ENCODE measurements at regions of chr17 and their contacts with region 1.

Region 1: GRCh38 chr17:55770148-55770870 is 19.5 kb downstream of the PCTP start:
- DNase-seq: no peak
- H3K4me3 ChIP-seq: no peak overlapping the region
- H3K27ac ChIP-seq: no peak overlapping the region
- H3K4me1 ChIP-seq: no peaks in the 10 kb centered on the region
- H3K27me3 ChIP-seq: no peaks in the 10 kb centered on the region
- CTCF ChIP-seq: peak in 2 of 3 experiments; percentile 11 to 69; a peak in 2 of 4 replicates
- EP300 ChIP-seq: no peak
- POLR2A ChIP-seq: no peak
- RAD21 ChIP-seq: peak; percentile 78

Region 2: GRCh38 chr17:55527540-55528118 is 242.7 kb before region 1 on chr17:
- CTCF ChIA-PET with region 1: interaction called, 169 read pairs
- POLR2A ChIA-PET with region 1: no interaction called
- DNase-seq: peak in 1 of 2 experiments; percentile 50
- H3K4me3 ChIP-seq: no peak overlapping the region
- H3K27ac ChIP-seq: no peak overlapping the region
- H3K4me1 ChIP-seq: peaks cover 0 to 2% (median 0%) of the 10 kb centered on the region in 4 experiments; a peak in 1 of 7 replicates
- H3K27me3 ChIP-seq: no peaks in the 10 kb centered on the region
- CTCF ChIP-seq: peak in 2 of 3 experiments; percentile 67 to 68; a peak in 3 of 4 replicates
- EP300 ChIP-seq: no peak
- POLR2A ChIP-seq: no peak
- RAD21 ChIP-seq: peak; percentile 88 to 89

Region 3: DNA sequence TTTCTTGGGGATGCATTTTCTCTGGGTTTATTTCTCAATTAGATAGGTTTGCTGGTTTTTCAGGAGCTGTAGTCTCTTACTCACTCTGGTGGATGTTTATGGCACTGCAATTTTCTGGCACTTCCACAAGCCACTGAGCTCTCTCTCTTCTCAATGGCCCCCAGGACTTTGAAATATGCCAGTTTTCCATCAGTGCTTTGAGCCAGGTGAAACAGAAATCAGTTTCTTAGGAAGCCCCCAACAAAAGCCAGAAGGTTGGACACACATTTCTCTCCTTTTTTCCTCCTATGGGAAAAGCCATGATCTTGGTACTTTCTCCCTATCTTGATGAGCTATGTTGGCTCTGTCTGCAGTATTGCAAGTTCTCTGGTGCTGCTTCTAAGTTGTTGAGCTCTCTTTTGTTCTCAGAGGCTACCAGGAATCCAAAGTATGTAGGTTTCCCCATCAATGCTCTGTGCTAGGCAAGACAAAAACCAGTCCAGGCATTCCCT is 168.4 kb before region 1 on chr17:
- CTCF ChIA-PET with region 1: interaction called, 18 read pairs
- POLR2A ChIA-PET with region 1: no interaction called
- DNase-seq: peak; percentile 21 to 58
- H3K4me3 ChIP-seq: peak overlapping the region in 1 of 4 experiments; percentile 37; a peak in 1 of 8 replicates
- H3K27ac ChIP-seq: no peak overlapping the region
- H3K4me1 ChIP-seq: peaks cover 0 to 3% (median under 1%) of the 10 kb centered on the region in 4 experiments; a peak in 3 of 7 replicates
- H3K27me3 ChIP-seq: no peaks in the 10 kb centered on the region
- CTCF ChIP-seq: peak in 2 of 3 experiments; percentile 72 to 78; a peak in 3 of 4 replicates
- EP300 ChIP-seq: no peak
- POLR2A ChIP-seq: no peak; a peak in 1 of 3 replicates
- RAD21 ChIP-seq: peak; percentile 77 to 83

Region 4: DNA sequence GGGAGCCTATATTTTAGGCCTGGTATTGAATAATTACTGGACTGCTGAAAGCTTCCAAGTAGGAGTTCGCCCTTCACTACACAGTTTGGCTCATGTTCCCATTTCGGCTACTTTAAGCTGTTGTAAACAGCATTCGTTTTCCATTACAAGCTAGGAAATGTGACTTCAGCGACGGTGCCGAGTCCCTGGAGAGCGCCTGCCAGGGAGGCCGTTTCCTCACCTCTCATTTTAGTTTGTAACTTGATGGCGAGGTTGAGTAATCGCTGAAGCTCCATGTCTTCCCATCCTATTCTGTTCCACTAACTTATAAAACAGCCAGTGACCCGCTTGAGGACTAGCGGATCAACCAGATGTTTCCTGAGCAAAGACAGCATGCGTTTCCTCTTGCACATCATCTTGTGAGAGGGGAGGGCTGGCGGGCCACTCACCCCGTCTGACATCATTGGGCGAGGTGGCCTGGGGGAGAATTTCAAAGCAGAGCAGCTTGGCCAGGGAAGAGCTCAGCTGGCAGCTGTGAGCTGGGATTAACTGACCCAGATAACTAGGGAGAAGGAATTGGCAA is 13.5 kb after region 1 on chr17:
- CTCF ChIA-PET with region 1: interaction called, 58 read pairs
- POLR2A ChIA-PET with region 1: no interaction called
- DNase-seq: no peak
- H3K4me3 ChIP-seq: no peak overlapping the region
- H3K27ac ChIP-seq: no peak overlapping the region
- H3K4me1 ChIP-seq: no peaks in the 10 kb centered on the region
- H3K27me3 ChIP-seq: no peaks in the 10 kb centered on the region
- CTCF ChIP-seq: no peak
- EP300 ChIP-seq: no peak
- POLR2A ChIP-seq: no peak
- RAD21 ChIP-seq: no peak

Region 5: DNA sequence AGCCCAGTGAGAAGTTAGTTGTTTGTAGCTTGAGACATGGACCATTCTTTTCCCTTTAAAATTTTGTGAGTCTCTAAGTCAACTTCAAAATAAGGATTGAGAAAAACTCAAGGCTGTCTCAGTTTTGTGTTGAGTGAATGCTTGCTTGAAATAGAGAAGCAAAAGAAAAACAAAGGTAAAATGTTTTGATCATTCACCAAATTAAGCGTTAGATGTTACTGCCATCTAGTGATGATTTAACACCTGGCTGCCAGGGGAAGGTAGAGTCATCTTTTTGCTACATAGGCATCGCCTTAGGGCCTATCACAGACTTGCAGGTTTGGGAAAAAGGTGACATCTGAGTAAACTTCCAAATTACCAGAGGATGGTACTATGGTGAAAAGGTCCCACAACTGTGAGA is 54.9 kb after region 1 on chr17:
- CTCF ChIA-PET with region 1: interaction called, 24 read pairs
- POLR2A ChIA-PET with region 1: no interaction called
- DNase-seq: no peak
- H3K4me3 ChIP-seq: no peak overlapping the region
- H3K27ac ChIP-seq: no peak overlapping the region
- H3K4me1 ChIP-seq: no peaks in the 10 kb centered on the region
- H3K27me3 ChIP-seq: no peaks in the 10 kb centered on the region
- CTCF ChIP-seq: peak in 2 of 3 experiments; percentile 36 to 69; a peak in 2 of 4 replicates
- EP300 ChIP-seq: no peak
- POLR2A ChIP-seq: no peak
- RAD21 ChIP-seq: peak; percentile 74 to 78

Region 6: GRCh38 chr17:55926276-55926990 is 156.1 kb after region 1 on chr17:
- CTCF ChIA-PET with region 1: no interaction called
- POLR2A ChIA-PET with region 1: no interaction called
- DNase-seq: no peak
- H3K4me3 ChIP-seq: no peak overlapping the region
- H3K27ac ChIP-seq: no peak overlapping the region
- H3K4me1 ChIP-seq: peaks cover 0 to 3% (median 2%) of the 10 kb centered on the region in 4 experiments; a peak in 2 of 7 replicates
- H3K27me3 ChIP-seq: no peaks in the 10 kb centered on the region; a peak in 1 of 7 replicates
- CTCF ChIP-seq: no peak
- EP300 ChIP-seq: no peak
- POLR2A ChIP-seq: no peak
- RAD21 ChIP-seq: no peak